ENCODE measurements at regions of chr1 and their contacts with region 1.

Region 1: DNA sequence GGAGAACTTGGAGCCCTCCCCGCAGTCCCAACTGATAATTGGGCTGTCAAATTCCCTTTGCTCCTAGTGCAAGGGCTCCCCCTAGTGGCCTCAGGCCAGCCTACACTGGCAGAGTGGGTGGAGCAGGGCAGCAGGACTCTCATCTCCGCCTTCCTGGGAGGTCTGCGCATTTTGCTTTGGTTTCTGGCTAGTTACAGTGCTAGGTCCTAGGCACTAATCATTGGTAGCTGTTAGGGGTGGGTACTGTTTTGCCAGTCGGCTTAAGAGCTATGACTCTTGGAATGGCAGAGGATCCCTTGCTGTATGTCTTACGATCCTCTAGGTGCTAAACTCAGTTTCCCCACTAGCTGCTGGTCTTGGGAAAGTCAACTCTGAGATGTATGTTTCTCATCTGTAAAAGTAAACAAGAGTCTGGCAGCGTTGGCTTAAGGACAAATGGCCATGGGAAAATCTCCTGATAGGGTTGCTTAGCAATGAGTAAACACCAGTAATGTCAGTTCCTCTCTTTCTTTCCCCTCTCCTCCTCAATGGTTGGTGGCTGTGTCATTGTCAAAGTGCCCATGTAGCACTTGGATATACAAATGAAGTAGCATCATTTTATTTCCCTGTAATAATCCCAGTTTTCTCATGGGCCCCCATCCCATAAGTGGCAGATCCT is 2.1 kb upstream of the FYB2 start:
- DNase-seq: peak; percentile 74 to 99
- H3K4me3 ChIP-seq: no peak overlapping the region
- H3K27ac ChIP-seq: no peak overlapping the region
- H3K4me1 ChIP-seq: peaks cover 2 to 9% (median 6%) of the 10 kb centered on the region in 4 experiments; a peak in 6 of 7 replicates
- H3K27me3 ChIP-seq: no peaks in the 10 kb centered on the region
- CTCF ChIP-seq: peak; percentile 91 to 99 (median 92)
- EP300 ChIP-seq: no peak
- POLR2A ChIP-seq: no peak
- RAD21 ChIP-seq: peak; percentile 90 to 97

Region 2: DNA sequence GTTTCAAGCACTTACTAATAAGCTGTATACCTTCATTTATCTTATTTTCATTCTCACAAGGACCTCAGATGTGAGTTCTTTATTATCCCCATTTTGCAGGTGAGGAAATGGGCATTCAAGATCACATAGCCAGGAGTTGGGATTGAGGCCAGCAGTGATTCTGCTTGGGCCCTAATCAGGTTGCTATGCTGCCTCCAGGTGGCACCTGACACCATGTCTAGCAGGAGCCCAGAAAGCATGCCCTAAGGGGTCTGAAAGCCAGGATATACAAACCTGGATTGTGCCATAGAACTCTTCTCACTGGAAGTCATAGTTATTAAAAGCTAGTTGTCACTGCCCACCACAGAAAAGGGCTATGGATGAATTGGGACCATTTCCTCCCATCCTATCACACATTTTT is 63.1 kb before region 1 on chr1:
- CTCF ChIA-PET with region 1: interaction called, 30 read pairs
- POLR2A ChIA-PET with region 1: no interaction called
- DNase-seq: peak; percentile 21 to 47
- H3K4me3 ChIP-seq: no peak overlapping the region
- H3K27ac ChIP-seq: no peak overlapping the region
- H3K4me1 ChIP-seq: no peaks in the 10 kb centered on the region
- H3K27me3 ChIP-seq: no peaks in the 10 kb centered on the region
- CTCF ChIP-seq: peak; percentile 63 to 78 (median 70)
- EP300 ChIP-seq: no peak
- POLR2A ChIP-seq: no peak
- RAD21 ChIP-seq: peak; percentile 81 to 86

Region 3: DNA sequence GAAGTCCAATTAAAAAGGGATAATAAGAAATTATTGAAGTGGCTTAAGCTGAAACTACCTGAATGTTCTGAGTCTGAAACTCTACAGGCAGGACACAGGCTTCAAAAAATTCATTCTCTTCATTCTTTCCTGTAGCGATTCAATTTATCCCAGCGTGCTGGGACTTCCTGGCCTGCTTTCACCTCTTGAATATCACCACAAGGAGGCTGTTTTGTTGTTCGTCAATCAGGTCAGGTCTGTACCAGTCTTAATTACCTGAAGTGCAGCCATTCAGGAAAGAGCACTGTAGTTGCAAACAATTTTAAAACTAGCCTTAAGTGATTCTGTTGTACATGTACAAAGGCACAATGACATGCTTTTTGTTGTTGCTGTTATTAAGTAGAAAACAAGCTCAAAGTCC is 40.4 kb before region 1 on chr1:
- CTCF ChIA-PET with region 1: interaction called, 12 read pairs
- POLR2A ChIA-PET with region 1: no interaction called
- DNase-seq: no peak
- H3K4me3 ChIP-seq: no peak overlapping the region
- H3K27ac ChIP-seq: no peak overlapping the region
- H3K4me1 ChIP-seq: no peaks in the 10 kb centered on the region
- H3K27me3 ChIP-seq: no peaks in the 10 kb centered on the region
- CTCF ChIP-seq: peak in 2 of 3 experiments; percentile 26 to 37; a peak in 3 of 4 replicates
- EP300 ChIP-seq: no peak
- POLR2A ChIP-seq: no peak
- RAD21 ChIP-seq: peak in 1 of 2 experiments; percentile 25; a peak in 1 of 4 replicates

Region 4: GRCh38 chr1:56788588-56788987 is 32.7 kb before region 1 on chr1:
- CTCF ChIA-PET with region 1: interaction called, 13 read pairs
- POLR2A ChIA-PET with region 1: no interaction called
- DNase-seq: no peak
- H3K4me3 ChIP-seq: no peak overlapping the region
- H3K27ac ChIP-seq: no peak overlapping the region
- H3K4me1 ChIP-seq: no peaks in the 10 kb centered on the region
- H3K27me3 ChIP-seq: no peaks in the 10 kb centered on the region
- CTCF ChIP-seq: no peak
- EP300 ChIP-seq: no peak
- POLR2A ChIP-seq: no peak
- RAD21 ChIP-seq: no peak

Region 5: DNA sequence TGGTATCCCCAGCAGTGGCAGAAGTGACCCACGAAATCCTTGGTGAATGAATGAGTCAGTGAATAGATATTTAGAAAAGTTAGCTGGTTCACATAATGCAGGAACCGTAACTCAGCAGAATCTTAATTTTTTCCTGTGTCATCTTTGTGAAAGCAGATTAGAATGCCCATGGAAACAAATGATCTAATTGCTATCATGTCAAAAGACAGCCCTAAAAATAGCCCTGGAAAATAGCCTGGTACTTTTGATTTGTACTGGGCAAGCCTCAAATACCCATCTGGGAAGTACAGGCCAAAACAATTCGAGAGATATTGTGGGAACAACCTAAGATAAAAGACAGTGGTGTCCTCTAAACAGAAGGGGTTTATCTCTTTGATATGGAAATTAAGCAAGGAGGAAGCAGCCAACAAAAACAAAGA is 23.2 kb before region 1 on chr1:
- CTCF ChIA-PET with region 1: interaction called, 17 read pairs
- POLR2A ChIA-PET with region 1: no interaction called
- DNase-seq: no peak
- H3K4me3 ChIP-seq: no peak overlapping the region
- H3K27ac ChIP-seq: no peak overlapping the region
- H3K4me1 ChIP-seq: peaks cover 2 to 11% (median 5%) of the 10 kb centered on the region in 4 experiments; a peak in 4 of 7 replicates
- H3K27me3 ChIP-seq: peaks cover 0 to 4% (median 0%) of the 10 kb centered on the region in 4 experiments; a peak in 2 of 7 replicates
- CTCF ChIP-seq: no peak
- EP300 ChIP-seq: no peak
- POLR2A ChIP-seq: no peak
- RAD21 ChIP-seq: no peak

Region 6: GRCh38 chr1:56803561-56804156 is 17.6 kb before region 1 on chr1:
- CTCF ChIA-PET with region 1: interaction called, 17 read pairs
- POLR2A ChIA-PET with region 1: no interaction called
- DNase-seq: peak in 1 of 2 experiments; percentile 68
- H3K4me3 ChIP-seq: no peak overlapping the region
- H3K27ac ChIP-seq: no peak overlapping the region
- H3K4me1 ChIP-seq: no peaks in the 10 kb centered on the region
- H3K27me3 ChIP-seq: peaks cover 0 to 1% (median 0%) of the 10 kb centered on the region in 4 experiments; a peak in 2 of 7 replicates
- CTCF ChIP-seq: peak; percentile 84 to 97 (median 89)
- EP300 ChIP-seq: no peak
- POLR2A ChIP-seq: no peak
- RAD21 ChIP-seq: peak; percentile 75 to 77

Region 7: DNA sequence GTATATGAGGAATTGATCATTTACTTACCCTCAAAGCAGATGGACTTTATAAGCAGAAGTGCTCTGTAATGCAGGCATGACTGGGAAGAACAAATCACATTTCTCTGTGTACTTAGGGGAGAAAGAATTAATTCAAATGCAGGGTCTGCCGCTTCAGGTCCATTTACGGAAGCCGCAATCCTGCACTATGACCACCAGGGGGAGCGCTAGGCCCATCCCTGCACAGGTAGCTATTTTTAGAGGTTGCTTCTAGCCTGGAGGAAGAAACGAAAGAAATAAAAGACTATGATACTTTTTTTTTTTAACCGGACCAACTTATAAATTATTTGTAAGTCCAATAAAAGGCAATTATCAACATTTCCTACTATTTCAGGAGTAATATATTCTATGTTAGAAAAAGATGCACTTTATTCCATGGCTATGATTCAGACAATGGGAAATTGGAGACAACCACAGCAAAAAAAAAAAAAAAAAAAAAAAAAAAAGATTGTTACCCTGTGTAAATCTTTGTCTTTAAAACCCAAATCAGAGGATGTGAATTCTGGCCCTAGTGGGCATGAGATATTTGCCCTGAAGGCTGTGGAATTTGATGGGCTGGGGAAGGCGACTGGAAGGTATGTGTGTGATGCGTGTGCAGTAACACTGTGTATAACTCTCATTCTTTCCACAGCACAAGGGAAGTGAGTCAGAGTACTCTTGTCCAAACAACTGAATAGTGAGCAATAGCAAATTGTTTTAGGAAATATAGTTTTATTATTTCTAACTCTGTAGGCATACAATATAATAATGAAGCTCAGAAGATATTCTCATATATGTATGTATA is 10.8 kb after region 1 on chr1:
- CTCF ChIA-PET with region 1: interaction called, 19 read pairs
- POLR2A ChIA-PET with region 1: interaction called, 3 read pairs
- DNase-seq: peak; percentile 46 to 81
- H3K4me3 ChIP-seq: no peak overlapping the region
- H3K27ac ChIP-seq: no peak overlapping the region
- H3K4me1 ChIP-seq: no peaks in the 10 kb centered on the region
- H3K27me3 ChIP-seq: peaks cover 0 to 2% (median 0%) of the 10 kb centered on the region in 4 experiments; a peak in 1 of 7 replicates
- CTCF ChIP-seq: peak; percentile 88 to 89 (median 89)
- EP300 ChIP-seq: no peak
- POLR2A ChIP-seq: no peak
- RAD21 ChIP-seq: peak; percentile 98

Measured in H1 (cell line).